ENCODE measurements at regions of chr1 and their contacts with region 1.

Region 1: GRCh38 chr1:202348509-202349205 is at the start of gene PPP1R12B:
- DNase-seq: peak; percentile 97
- ATAC-seq: peak; percentile 99
- H3K4me3 Mint-ChIP-seq: peak within 1 kb of the TSS; percentile 76
- H3K27ac Mint-ChIP-seq: peak within 1 kb of the TSS; percentile 86
- H3K4me1 Mint-ChIP-seq: peaks cover 22% of the 10 kb centered on the region
- H3K27me3 Mint-ChIP-seq: no peaks in the 10 kb centered on the region
- total RNA-seq, gene PPP1R12B: 10.3 to 13.2 TPM

Region 2: GRCh38 chr1:201838381-201838780 is 510.3 kb before region 1 on chr1:
- CTCF ChIA-PET with region 1: no interaction called
- POLR2A ChIA-PET with region 1: no interaction called
- intact Hi-C with region 1: loop called in 1 of 2 experiments (anchors 10 kb)
- DNase-seq: no peak
- ATAC-seq: no peak
- H3K4me3 Mint-ChIP-seq: no peak overlapping the region
- H3K27ac Mint-ChIP-seq: no peak overlapping the region
- H3K4me1 Mint-ChIP-seq: peaks cover 27% of the 10 kb centered on the region
- H3K27me3 Mint-ChIP-seq: no peaks in the 10 kb centered on the region

Region 3: DNA sequence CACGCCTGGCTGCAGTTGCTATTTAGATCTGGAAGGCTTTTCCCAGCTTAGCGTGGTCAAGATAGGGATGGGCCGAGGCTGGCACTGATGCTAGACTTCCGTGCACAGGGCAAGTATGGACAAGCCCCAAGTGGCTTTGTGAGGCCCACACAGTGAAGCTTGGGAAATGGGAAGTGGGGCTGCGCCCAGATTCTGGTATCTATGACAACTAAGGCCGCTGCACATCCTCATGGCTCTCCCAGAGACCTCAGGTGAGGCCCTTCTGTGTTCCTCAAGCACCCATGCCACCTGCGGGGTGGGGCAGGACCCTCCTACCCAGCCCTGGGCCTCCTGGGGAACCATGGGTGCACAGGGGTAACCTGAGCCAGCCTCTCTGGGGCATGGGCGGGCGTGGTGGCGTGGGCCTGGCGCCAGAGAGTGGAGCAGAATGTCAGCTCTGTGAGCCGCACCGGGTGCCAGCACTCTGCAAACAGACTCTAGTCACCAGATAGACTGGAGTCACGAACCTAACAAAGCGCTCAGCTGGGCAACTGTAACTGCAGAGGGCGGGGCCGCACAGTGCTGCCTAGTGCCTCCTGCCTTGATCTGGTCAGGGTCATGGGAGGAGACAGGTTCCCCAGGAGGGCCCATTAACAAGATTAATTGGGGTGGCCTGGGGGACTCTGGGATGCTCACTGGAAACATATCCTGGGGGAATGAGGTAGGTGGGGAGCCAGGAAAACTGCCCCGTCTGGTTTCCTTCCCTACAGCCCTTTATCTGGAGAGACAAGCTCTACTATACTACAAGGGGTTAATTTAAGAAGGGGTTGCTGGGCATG is 291.8 kb before region 1 on chr1:
- CTCF ChIA-PET with region 1: no interaction called
- POLR2A ChIA-PET with region 1: no interaction called
- intact Hi-C with region 1: no loop called
- DNase-seq: no peak
- ATAC-seq: no peak
- H3K4me3 Mint-ChIP-seq: no peak overlapping the region
- H3K27ac Mint-ChIP-seq: no peak overlapping the region
- H3K4me1 Mint-ChIP-seq: no peaks in the 10 kb centered on the region
- H3K27me3 Mint-ChIP-seq: peaks cover 2% of the 10 kb centered on the region

Region 4: DNA sequence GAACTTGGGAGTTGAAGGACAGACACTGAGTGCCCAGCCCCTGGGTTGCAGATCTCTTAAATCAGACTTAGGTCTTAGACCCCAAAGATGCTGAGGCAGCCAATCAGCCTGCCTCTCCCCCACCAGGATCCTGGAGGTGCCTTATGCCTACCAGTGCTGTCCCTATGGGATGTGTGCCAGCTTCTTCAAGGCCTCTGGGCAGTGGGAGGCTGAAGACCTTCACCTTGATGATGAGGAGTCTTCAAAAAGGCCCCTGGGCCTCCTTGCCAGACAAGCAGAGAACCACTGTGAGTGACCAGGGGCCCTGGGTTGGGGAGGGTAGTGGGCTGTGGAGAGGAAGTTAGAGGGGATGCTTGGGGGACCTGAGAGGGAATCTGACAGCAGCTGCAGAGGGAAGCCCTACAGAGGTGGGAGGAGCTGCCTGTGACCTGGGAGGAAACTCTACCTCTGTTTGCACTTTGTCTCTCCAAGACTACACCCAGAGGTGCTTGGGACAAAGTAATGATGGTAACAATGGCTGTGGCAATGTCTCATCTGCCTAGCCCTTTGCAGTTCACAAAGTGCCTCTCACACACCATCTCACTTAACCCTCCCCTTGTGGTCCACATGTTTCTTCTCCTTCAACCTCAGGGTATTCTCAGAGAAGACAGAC is 38.5 kb before region 1 on chr1:
- CTCF ChIA-PET with region 1: no interaction called
- POLR2A ChIA-PET with region 1: no interaction called
- intact Hi-C with region 1: no loop called
- DNase-seq: no peak
- ATAC-seq: no peak
- H3K4me3 Mint-ChIP-seq: no peak overlapping the region
- H3K27ac Mint-ChIP-seq: no peak overlapping the region
- H3K4me1 Mint-ChIP-seq: peaks cover 2% of the 10 kb centered on the region
- H3K27me3 Mint-ChIP-seq: peaks cover 3% of the 10 kb centered on the region

Region 5: GRCh38 chr1:202416641-202417040 is 68.0 kb after region 1 on chr1:
- CTCF ChIA-PET with region 1: interaction called, 12 read pairs
- POLR2A ChIA-PET with region 1: no interaction called
- intact Hi-C with region 1: no loop called
- DNase-seq: no peak
- ATAC-seq: no peak
- H3K4me3 Mint-ChIP-seq: no peak overlapping the region
- H3K27ac Mint-ChIP-seq: no peak overlapping the region
- H3K4me1 Mint-ChIP-seq: no peaks in the 10 kb centered on the region
- H3K27me3 Mint-ChIP-seq: no peaks in the 10 kb centered on the region

Region 6: DNA sequence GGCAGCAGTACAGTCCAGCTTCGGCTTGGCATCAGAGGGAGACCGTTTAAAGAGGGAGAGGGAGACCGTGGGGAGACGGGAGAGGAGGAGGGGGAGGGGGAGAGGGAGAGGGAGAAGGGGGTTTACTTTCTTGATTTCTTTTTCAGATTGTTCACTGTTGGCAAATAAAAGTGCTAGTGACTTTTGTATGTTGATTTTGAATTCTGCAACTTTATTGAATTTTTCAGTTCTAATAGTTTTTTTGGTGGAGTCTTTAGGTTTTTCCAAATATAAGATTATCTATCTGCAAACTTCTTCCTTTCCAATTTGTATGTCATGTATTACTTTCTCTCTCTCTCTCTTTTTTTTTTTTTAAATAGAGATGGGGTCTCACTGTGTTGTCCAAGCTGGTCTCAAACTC is 103.8 kb after region 1 on chr1:
- CTCF ChIA-PET with region 1: no interaction called
- POLR2A ChIA-PET with region 1: no interaction called
- intact Hi-C with region 1: no loop called
- DNase-seq: no peak
- ATAC-seq: no peak
- H3K4me3 Mint-ChIP-seq: no peak overlapping the region
- H3K27ac Mint-ChIP-seq: no peak overlapping the region
- H3K4me1 Mint-ChIP-seq: peaks cover 13% of the 10 kb centered on the region
- H3K27me3 Mint-ChIP-seq: no peaks in the 10 kb centered on the region

Region 7: DNA sequence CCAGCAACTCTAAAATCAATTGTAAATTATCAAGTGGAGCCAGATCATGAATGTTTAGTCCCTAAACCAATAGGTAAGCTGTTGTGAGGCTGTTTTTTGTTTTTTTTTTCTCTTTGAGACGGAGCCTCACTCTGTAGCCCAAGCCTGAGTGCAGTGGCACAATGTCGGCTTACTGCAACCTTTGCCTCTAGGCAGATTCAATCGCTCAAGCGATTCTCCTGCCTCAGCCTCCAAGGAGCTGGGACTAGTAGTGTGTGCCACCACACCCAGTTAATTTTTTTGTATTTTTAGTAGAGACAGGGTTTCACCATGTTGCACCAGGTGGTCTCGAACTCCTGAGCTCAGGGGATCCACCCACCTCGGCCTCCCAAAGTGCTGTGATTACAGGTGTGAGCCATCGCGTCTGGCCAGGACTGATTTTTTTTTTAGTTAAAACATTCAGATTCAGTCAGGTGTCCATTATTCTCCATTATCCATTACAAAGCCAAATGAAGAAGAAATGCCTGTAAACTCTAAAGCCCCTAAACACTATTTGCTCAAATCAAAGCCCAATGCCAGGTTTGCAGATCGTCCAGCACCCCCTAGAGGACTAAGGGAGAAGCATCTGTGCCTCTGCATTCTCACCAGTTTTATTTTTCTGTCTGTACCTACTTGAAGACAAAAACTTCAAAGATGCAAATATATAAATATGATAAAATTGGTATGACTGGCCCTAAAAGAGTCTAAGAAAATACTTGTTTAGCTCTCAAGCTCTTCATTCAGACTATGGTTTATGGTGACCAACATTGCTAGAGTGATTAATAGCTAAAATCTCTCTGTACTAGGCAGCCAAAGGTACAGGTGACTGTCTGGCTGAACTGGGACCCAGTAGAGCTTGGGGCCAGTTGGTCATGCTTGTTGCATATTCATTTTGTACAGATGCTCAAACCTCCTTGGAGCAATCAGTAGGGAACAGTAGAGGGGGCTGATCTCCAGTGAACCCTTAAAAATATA is 223.0 kb after region 1 on chr1:
- CTCF ChIA-PET with region 1: interaction called, 4 read pairs
- POLR2A ChIA-PET with region 1: no interaction called
- intact Hi-C with region 1: loop called (anchors 1 to 2 kb)
- DNase-seq: peak; percentile 32
- ATAC-seq: no peak
- H3K4me3 Mint-ChIP-seq: no peak overlapping the region
- H3K27ac Mint-ChIP-seq: no peak overlapping the region
- H3K4me1 Mint-ChIP-seq: no peaks in the 10 kb centered on the region
- H3K27me3 Mint-ChIP-seq: no peaks in the 10 kb centered on the region

Region 8: GRCh38 chr1:202713110-202713509 is 364.5 kb after region 1 on chr1:
- CTCF ChIA-PET with region 1: interaction called, 3 read pairs
- POLR2A ChIA-PET with region 1: no interaction called
- intact Hi-C with region 1: loop called in 1 of 2 experiments (anchors 5 kb)
- DNase-seq: no peak
- ATAC-seq: no peak
- H3K4me3 Mint-ChIP-seq: no peak overlapping the region
- H3K27ac Mint-ChIP-seq: no peak overlapping the region
- H3K4me1 Mint-ChIP-seq: no peaks in the 10 kb centered on the region
- H3K27me3 Mint-ChIP-seq: peaks cover 39% of the 10 kb centered on the region

Region 9: DNA sequence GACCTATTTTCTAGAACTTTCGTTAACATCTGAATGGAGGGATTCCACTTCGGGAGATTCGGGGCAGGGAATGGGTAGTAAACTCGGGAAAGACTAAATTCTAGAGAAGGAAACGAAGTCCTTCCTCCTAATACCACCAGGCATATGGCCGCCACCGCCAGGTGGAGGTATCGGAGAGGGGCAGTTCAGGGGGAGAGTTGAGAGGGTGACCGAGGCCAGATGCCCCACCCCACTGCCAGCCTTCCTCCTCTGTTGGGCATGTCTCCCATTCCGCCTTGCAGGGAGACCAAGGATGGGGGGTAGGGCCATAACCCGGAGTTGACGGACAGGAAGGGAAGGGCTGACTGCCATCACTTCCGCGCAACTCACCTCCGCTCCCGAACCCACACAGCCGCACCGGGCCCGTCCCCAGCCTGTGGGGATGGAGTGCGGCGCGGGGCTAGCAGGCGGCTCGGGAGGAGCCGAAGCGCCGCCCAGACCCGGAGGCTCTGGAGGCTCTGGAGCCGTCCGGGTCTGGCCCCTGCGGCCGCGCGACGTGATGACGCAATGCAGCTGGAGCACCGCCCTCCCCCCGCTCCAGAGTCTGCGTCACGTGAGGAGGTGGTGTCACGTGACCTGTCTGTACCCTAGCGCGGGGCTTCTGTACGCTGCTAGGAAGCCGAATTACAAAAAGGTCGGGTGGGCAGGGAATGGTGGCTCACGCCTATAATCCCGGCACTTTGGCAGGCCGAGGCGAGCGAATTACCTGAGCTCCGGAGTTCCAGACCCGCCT is 578.2 kb after region 1 on chr1 and contains the start of gene KLHL12:
- CTCF ChIA-PET with region 1: no interaction called
- POLR2A ChIA-PET with region 1: no interaction called
- intact Hi-C with region 1: loop called in 1 of 2 experiments (anchors 2 kb)
- DNase-seq: peak; percentile 98
- ATAC-seq: peak; percentile 96
- H3K4me3 Mint-ChIP-seq: peak within 1 kb of the TSS; percentile 86
- H3K27ac Mint-ChIP-seq: peak within 1 kb of the TSS; percentile 85
- H3K4me1 Mint-ChIP-seq: peaks cover 24% of the 10 kb centered on the region
- H3K27me3 Mint-ChIP-seq: no peaks in the 10 kb centered on the region
- total RNA-seq, gene KLHL12: 32.1 to 39.1 TPM

Region 10: GRCh38 chr1:203006948-203007871 is 658.6 kb after region 1 on chr1 and contains the start of gene TMEM183A:
- CTCF ChIA-PET with region 1: no interaction called
- POLR2A ChIA-PET with region 1: no interaction called
- intact Hi-C with region 1: loop called in 1 of 2 experiments (anchors 1 kb)
- DNase-seq: peak; percentile 98
- ATAC-seq: peak; percentile 96
- H3K4me3 Mint-ChIP-seq: peak within 1 kb of the TSS; percentile 99
- H3K27ac Mint-ChIP-seq: peak within 1 kb of the TSS; percentile 98
- H3K4me1 Mint-ChIP-seq: peaks cover 23% of the 10 kb centered on the region
- H3K27me3 Mint-ChIP-seq: no peaks in the 10 kb centered on the region
- total RNA-seq, gene TMEM183A: 68.6 to 71.0 TPM

Region 11: DNA sequence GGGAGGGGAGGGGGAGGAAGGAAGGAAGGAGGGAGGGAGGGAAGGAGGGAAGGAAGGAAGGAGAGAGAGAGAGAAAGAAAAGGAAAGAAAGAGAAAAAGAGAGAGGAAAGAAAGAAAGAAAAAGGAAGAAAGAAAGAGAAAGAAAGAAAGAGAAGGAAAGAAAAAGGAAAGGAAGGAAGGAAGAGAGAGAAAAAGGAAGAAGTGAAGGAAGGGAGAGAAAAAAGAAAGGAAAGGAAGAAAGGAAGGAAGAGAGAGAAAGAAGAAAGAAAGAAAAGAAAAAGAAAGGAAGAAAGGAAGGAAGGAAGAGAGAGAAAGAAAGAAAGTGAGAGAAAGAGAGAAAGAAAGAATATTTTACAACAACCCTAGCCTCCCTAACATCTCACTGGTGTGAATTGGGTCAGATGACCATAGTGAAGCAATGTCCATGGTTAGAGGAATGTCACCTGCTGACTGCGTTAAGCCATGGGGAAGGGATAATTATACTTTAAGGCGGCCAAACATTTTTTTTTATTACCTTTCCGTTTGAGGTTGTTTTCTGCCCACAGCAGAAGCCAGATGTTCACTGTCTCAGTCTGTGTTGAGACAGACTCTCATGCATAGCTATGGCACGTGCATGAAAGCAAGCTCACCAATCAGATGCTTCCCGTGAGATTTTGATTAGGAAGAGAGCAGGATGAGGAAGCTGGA is 1589.1 kb after region 1 on chr1:
- CTCF ChIA-PET with region 1: no interaction called
- POLR2A ChIA-PET with region 1: no interaction called
- intact Hi-C with region 1: no loop called
- DNase-seq: no peak
- ATAC-seq: no peak
- H3K4me3 Mint-ChIP-seq: no peak overlapping the region
- H3K27ac Mint-ChIP-seq: no peak overlapping the region
- H3K4me1 Mint-ChIP-seq: no peaks in the 10 kb centered on the region
- H3K27me3 Mint-ChIP-seq: peaks cover 4% of the 10 kb centered on the region